CD4-positive, alpha-beta memory T cell (primary cell): ENCODE measurements at regions of chr9 and their contacts with region 1.

Region 1: GRCh38 chr9:35814841-35815543 is at the start of gene HINT2:
- DNase-seq: peak; percentile 96 to 99 (median 98)
- H3K4me3 ChIP-seq: peak within 1 kb of the TSS; percentile 95 to 100
- H3K4me3 Mint-ChIP-seq: peak within 1 kb of the TSS; percentile 89 to 98 (median 95)
- H3K27ac ChIP-seq: peak within 1 kb of the TSS; percentile 70
- H3K27ac Mint-ChIP-seq: peak within 1 kb of the TSS; percentile 91 to 98 (median 96)
- H3K4me1 ChIP-seq: peaks cover 34% of the 10 kb centered on the region
- H3K4me1 Mint-ChIP-seq: peaks cover 20 to 50% (median 36%) of the 10 kb centered on the region in 4 donors
- H3K27me3 ChIP-seq: no peaks in the 10 kb centered on the region
- H3K27me3 Mint-ChIP-seq: no peaks in the 10 kb centered on the region
- total RNA-seq, gene HINT2: 22.9 to 30.2 TPM

Region 2: DNA sequence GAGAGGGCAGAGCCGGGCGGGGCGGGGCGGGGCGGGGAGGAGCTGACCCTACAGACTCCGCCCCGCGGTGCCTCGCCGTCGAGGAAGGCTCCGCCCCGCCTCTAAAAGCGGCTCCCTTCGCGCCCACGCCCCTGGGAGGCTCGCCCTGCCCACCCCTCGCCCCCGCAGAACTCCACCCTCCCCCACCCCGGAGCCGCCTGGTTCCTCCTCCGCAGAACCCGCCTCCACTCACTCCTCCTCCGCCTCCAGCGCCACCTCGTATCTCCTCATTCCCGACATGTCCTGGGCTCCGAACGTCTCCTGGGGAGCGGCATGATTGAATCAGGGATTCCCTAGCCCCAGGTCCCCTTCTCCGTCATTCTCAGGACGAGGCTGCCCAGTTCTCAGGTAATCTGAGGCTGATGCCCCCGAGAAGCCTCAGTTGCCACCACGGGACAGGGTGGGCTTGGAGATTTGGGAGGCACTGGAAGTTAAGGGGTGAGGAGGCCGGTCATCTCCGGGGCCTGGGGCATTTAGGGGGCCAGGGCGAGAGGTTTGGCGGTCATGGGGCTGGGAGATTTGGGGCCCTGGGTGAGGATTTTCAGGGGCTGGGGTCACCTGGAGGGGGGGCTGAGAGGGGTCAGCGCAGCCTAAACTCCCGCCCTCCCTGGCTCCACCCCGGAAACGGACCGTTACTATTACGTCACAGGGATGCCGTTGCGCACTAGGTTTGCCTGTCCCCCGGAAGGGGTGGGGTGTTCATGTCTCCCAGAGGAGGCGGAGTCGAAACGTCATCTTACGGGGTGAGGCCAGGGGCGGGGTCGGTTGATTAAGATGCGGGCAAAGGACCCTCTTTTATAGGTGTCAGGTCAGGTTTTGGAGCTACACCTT is 1149.4 kb before region 1 on chr9:
- CTCF ChIA-PET with region 1: no interaction called
- POLR2A ChIA-PET with region 1: no interaction called
- intact Hi-C with region 1: loop called (anchors 10 kb)
- DNase-seq: peak; percentile 87 to 94 (median 89)
- H3K4me3 ChIP-seq: peak overlapping the region; percentile 75 to 95
- H3K4me3 Mint-ChIP-seq: peak overlapping the region; percentile 85 to 97 (median 93)
- H3K27ac ChIP-seq: peak overlapping the region; percentile 98
- H3K27ac Mint-ChIP-seq: peak overlapping the region; percentile 95 to 99 (median 99)
- H3K4me1 ChIP-seq: peaks cover 59% of the 10 kb centered on the region
- H3K4me1 Mint-ChIP-seq: peaks cover 41 to 65% (median 53%) of the 10 kb centered on the region in 4 donors
- H3K27me3 ChIP-seq: no peaks in the 10 kb centered on the region
- H3K27me3 Mint-ChIP-seq: no peaks in the 10 kb centered on the region

Region 3: DNA sequence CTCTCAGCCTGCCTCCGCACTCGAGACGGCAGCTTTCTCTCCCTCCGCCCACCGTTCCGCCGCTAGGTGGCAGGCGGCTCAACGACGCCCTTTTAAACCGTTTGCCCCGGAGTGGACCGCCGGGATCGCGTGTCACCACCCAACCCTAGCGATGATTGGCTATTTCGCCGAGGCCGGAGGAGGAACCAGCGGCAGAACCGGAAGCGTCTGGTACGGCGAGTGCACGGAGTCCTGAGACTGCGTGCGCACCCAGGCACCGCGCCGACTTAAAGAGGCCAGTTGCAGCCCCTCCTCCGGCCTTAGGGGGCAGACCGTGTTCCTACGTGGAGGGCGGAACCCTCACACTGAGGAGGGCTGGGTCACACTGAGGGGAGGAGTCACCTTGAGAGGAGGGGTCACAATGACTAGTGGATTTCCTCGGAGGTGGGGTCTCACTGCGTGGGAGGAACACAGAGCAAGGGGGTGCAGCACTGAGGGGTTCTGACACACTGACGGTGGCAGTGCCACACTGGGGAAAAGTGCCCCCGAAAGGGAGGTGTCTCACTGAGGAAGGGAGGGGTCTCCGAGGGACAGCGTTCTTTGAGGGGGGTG is 210.9 kb before region 1 on chr9:
- CTCF ChIA-PET with region 1: interaction called, 3 read pairs
- POLR2A ChIA-PET with region 1: interaction called, 3 read pairs
- intact Hi-C with region 1: loop called (anchors 1 kb)
- DNase-seq: peak; percentile 98 to 99 (median 99)
- H3K4me3 ChIP-seq: peak overlapping the region; percentile 75 to 84
- H3K4me3 Mint-ChIP-seq: peak overlapping the region; percentile 95 to 100 (median 98)
- H3K27ac ChIP-seq: peak overlapping the region; percentile 85
- H3K27ac Mint-ChIP-seq: peak overlapping the region; percentile 96 to 100 (median 99)
- H3K4me1 ChIP-seq: peaks cover 37% of the 10 kb centered on the region
- H3K4me1 Mint-ChIP-seq: peaks cover 25 to 47% (median 32%) of the 10 kb centered on the region in 4 donors
- H3K27me3 ChIP-seq: no peaks in the 10 kb centered on the region
- H3K27me3 Mint-ChIP-seq: no peaks in the 10 kb centered on the region

Region 4: DNA sequence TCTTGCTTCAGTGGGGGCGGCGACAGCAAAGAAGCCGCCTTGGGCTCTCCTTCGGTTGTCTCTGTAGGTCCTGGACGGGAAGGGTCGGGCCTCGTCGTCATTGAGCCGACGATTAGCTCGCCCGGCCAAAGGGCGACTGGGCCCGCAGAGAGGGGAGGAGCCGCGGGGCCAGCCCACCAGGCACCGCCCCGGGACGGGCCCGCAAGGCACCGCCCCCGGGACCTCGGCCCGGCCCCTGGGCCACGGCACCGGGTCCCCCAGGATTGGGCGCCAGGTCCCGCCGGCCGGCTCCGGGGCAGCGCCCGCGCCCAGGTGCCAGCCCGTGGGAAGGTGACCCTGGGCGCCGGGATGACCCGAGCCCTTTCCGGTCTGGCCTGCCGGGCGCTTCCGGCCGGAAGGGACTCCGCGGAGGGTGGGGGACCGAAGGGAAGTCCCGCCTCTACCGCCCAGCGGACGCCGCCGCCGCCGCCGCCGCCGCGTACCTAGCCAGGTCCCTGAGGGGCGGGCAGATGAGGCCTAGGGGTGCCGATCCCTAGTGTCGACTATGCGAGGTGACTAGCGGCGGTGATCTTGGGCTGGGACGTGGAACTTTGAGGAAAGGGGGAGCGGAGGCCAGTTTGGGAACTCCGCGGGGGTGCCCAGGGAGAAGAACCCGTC is 66.0 kb before region 1 on chr9 and contains the starts of genes GBA2 and RGP1:
- CTCF ChIA-PET with region 1: interaction called, 4 read pairs
- POLR2A ChIA-PET with region 1: interaction called, 17 read pairs
- intact Hi-C with region 1: no loop called
- DNase-seq: peak; percentile 50 to 71 (median 62)
- H3K4me3 ChIP-seq: peak within 1 kb of the TSS; percentile 89 to 92
- H3K4me3 Mint-ChIP-seq: peak within 1 kb of the TSS; percentile 92 to 97 (median 94)
- H3K27ac ChIP-seq: peak within 1 kb of the TSS; percentile 82
- H3K27ac Mint-ChIP-seq: peak within 1 kb of the TSS; percentile 87 to 97 (median 96)
- H3K4me1 ChIP-seq: peaks cover 45% of the 10 kb centered on the region
- H3K4me1 Mint-ChIP-seq: peaks cover 37 to 73% (median 51%) of the 10 kb centered on the region in 4 donors
- H3K27me3 ChIP-seq: no peaks in the 10 kb centered on the region
- H3K27me3 Mint-ChIP-seq: no peaks in the 10 kb centered on the region
- total RNA-seq, gene GBA2: 61.1 to 66.3 TPM
- total RNA-seq, gene RGP1: 31.8 to 33.8 TPM

Region 5: GRCh38 chr9:35829084-35829763 is 14.2 kb after region 1 on chr9 and contains the start of gene TMEM8B:
- CTCF ChIA-PET with region 1: interaction called, 58 read pairs
- POLR2A ChIA-PET with region 1: interaction called, 8 read pairs
- intact Hi-C with region 1: loop called (anchors 1 kb)
- DNase-seq: peak; percentile 85 to 96 (median 88)
- H3K4me3 ChIP-seq: peak within 1 kb of the TSS; percentile 61 to 70
- H3K4me3 Mint-ChIP-seq: peak within 1 kb of the TSS; percentile 92 to 100 (median 96)
- H3K27ac ChIP-seq: peak within 1 kb of the TSS; percentile 66
- H3K27ac Mint-ChIP-seq: peak within 1 kb of the TSS; percentile 74 to 99 (median 98)
- H3K4me1 ChIP-seq: peaks cover 20% of the 10 kb centered on the region
- H3K4me1 Mint-ChIP-seq: peaks cover 23 to 39% (median 35%) of the 10 kb centered on the region in 4 donors
- H3K27me3 ChIP-seq: no peaks in the 10 kb centered on the region
- H3K27me3 Mint-ChIP-seq: no peaks in the 10 kb centered on the region
- total RNA-seq, gene TMEM8B: 7.4 to 10.5 TPM

Region 6: GRCh38 chr9:36400332-36401163 is 585.6 kb after region 1 on chr9:
- CTCF ChIA-PET with region 1: no interaction called
- POLR2A ChIA-PET with region 1: no interaction called
- intact Hi-C with region 1: loop called (anchors 10 kb)
- DNase-seq: peak; percentile 89 to 93 (median 90)
- H3K4me3 ChIP-seq: peak overlapping the region; percentile 65 to 77
- H3K4me3 Mint-ChIP-seq: peak overlapping the region; percentile 92 to 97 (median 94)
- H3K27ac ChIP-seq: peak overlapping the region; percentile 97
- H3K27ac Mint-ChIP-seq: peak overlapping the region; percentile 92 to 100 (median 98)
- H3K4me1 ChIP-seq: peaks cover 45% of the 10 kb centered on the region
- H3K4me1 Mint-ChIP-seq: peaks cover 30 to 58% (median 44%) of the 10 kb centered on the region in 4 donors
- H3K27me3 ChIP-seq: no peaks in the 10 kb centered on the region
- H3K27me3 Mint-ChIP-seq: no peaks in the 10 kb centered on the region